CD8-positive, alpha-beta T cell (primary cell): ENCODE measurements at regions of chr13 and their contacts with region 1.

Region 1: DNA sequence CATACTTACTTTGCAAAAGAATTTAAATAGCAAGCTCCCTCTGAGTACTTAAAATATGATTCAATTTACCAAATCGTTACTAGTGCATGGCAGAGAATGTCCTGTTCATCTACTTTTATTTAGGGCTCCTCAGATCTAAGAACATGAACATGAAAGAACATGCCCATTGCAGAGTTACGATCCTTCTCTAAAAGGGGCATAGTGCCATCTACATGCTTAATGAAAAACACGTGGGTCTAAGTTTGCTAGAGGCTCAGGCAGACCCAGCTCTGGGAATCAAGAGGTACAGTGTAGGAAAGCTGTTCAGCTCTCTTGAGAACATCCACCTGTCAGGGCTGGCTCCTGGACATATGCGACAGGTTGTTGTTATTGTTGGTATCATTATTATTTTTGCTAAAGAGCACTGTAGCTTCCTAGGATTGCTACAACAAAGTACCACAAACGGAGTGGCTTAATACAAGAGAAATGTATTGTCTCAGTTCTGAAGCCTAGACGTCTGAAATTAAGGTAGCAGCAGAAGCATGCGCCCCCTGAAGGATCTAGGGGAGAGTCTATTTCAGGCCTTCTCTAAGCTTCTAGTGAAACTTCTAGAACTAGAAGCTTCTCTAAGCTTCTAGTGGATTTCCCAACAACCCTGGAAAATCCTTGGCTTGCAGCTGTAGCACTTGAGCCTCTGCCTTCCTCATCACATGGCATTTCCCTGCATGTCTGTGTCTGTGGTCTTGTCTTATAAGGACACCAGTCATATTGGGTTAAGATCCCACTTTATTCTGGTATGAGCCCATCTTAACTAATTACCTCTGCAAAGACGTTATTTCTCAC is 133.9 kb downstream of the DCT start:
- DNase-seq: peak in 2 of 9 experiments; percentile 55 to 68
- ATAC-seq: peak; percentile 56
- H3K4me3 ChIP-seq: no peak overlapping the region
- H3K4me3 Mint-ChIP-seq: no peak overlapping the region
- H3K27ac ChIP-seq: no peak overlapping the region
- H3K27ac Mint-ChIP-seq: no peak overlapping the region
- H3K4me1 ChIP-seq: no peaks in the 10 kb centered on the region
- H3K4me1 Mint-ChIP-seq: peaks cover 10% of the 10 kb centered on the region
- H3K27me3 ChIP-seq: no peaks in the 10 kb centered on the region
- H3K27me3 Mint-ChIP-seq: peaks cover 2% of the 10 kb centered on the region
- CTCF ChIP-seq: peak; percentile 34

Region 2: DNA sequence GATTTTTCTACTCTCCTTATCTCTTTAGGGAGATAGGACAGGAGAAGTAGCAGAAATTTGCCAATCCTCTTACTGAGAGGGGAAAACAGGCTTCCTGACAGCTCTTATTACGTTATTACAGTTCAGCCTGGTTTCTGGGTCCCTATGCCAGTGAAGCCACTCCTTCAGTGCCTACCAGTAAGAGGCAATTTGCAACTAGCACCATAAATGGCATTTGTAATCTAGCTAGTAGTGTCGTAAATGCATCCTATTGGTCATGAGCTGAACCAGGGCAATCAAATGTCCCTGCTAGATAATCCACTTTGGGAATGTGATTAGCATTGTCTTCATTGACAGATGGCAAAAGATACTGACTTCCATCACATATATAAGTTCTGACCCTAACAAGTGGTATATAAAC is 294.9 kb before region 1 on chr13:
- CTCF ChIA-PET with region 1: no interaction called
- POLR2A ChIA-PET with region 1: no interaction called
- intact Hi-C with region 1: no loop called
- DNase-seq: no peak
- ATAC-seq: no peak
- H3K4me3 ChIP-seq: no peak overlapping the region
- H3K4me3 Mint-ChIP-seq: no peak overlapping the region
- H3K27ac ChIP-seq: no peak overlapping the region
- H3K27ac Mint-ChIP-seq: no peak overlapping the region
- H3K4me1 ChIP-seq: no peaks in the 10 kb centered on the region
- H3K4me1 Mint-ChIP-seq: no peaks in the 10 kb centered on the region
- H3K27me3 ChIP-seq: no peaks in the 10 kb centered on the region
- H3K27me3 Mint-ChIP-seq: peaks cover 18% of the 10 kb centered on the region
- CTCF ChIP-seq: no peak

Region 3: GRCh38 chr13:94112227-94112626 is 233.4 kb before region 1 on chr13:
- CTCF ChIA-PET with region 1: interaction called, 7 read pairs
- POLR2A ChIA-PET with region 1: no interaction called
- intact Hi-C with region 1: loop called in 1 of 2 experiments (anchors 10 kb)
- DNase-seq: no peak
- ATAC-seq: no peak
- H3K4me3 ChIP-seq: no peak overlapping the region
- H3K4me3 Mint-ChIP-seq: no peak overlapping the region
- H3K27ac ChIP-seq: no peak overlapping the region
- H3K27ac Mint-ChIP-seq: no peak overlapping the region
- H3K4me1 ChIP-seq: no peaks in the 10 kb centered on the region
- H3K4me1 Mint-ChIP-seq: no peaks in the 10 kb centered on the region
- H3K27me3 ChIP-seq: no peaks in the 10 kb centered on the region
- H3K27me3 Mint-ChIP-seq: no peaks in the 10 kb centered on the region
- CTCF ChIP-seq: no peak

Region 4: DNA sequence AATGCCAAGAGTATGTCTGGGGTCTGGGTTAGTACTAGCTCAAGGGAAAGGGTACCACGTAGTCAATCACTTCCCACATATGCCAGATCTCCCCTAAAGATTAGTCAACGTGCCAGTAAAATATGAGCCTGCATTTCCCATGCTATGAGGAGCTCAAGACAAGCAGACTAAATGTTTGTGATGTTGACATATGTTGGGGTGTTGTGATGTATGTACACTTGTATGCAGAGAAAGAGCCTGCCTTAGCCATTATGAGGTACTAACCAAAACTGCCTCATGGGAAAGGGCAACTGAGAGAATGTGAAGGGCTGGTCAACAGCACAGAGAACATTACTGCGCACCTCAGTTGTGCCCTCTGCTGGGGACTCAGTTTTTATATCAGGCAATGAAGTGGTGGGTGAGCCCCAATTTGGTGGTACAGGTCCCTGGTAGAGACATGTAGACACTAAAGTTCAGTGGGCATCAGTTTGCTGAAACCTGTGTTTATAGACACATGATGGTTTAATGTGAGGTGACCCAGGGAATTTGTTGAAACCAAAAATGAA is 153.1 kb before region 1 on chr13:
- CTCF ChIA-PET with region 1: interaction called, 5 read pairs
- POLR2A ChIA-PET with region 1: no interaction called
- intact Hi-C with region 1: loop called in 1 of 2 experiments (anchors 10 kb)
- DNase-seq: peak in 2 of 9 experiments; percentile 3 to 5
- ATAC-seq: no peak
- H3K4me3 ChIP-seq: no peak overlapping the region
- H3K4me3 Mint-ChIP-seq: no peak overlapping the region
- H3K27ac ChIP-seq: no peak overlapping the region
- H3K27ac Mint-ChIP-seq: no peak overlapping the region
- H3K4me1 ChIP-seq: no peaks in the 10 kb centered on the region
- H3K4me1 Mint-ChIP-seq: peaks cover 2% of the 10 kb centered on the region
- H3K27me3 ChIP-seq: no peaks in the 10 kb centered on the region
- H3K27me3 Mint-ChIP-seq: peaks cover 2% of the 10 kb centered on the region
- CTCF ChIP-seq: no peak

Region 5: DNA sequence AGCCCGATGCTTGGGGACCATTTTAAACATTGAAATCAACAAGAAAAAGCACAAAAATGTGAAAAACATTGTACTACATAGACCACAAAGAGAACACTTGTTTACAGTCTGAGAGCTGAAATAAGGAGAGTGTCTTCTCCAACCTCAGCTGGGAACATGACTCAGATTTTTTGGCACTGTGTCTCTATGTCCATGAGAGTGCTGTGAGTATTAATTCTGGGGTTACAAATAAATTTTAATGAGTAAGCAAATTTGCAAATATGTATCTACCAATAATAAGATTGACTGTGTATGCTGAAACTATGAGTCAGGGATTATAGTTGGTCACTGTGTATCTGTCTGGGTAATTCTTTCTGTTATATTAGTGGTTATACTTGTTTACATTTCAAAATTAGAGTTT is 40.1 kb before region 1 on chr13:
- CTCF ChIA-PET with region 1: no interaction called
- POLR2A ChIA-PET with region 1: no interaction called
- intact Hi-C with region 1: no loop called
- DNase-seq: no peak
- ATAC-seq: no peak
- H3K4me3 ChIP-seq: no peak overlapping the region
- H3K4me3 Mint-ChIP-seq: no peak overlapping the region
- H3K27ac ChIP-seq: no peak overlapping the region
- H3K27ac Mint-ChIP-seq: no peak overlapping the region
- H3K4me1 ChIP-seq: no peaks in the 10 kb centered on the region
- H3K4me1 Mint-ChIP-seq: no peaks in the 10 kb centered on the region
- H3K27me3 ChIP-seq: no peaks in the 10 kb centered on the region
- H3K27me3 Mint-ChIP-seq: no peaks in the 10 kb centered on the region
- CTCF ChIP-seq: no peak

Region 6: DNA sequence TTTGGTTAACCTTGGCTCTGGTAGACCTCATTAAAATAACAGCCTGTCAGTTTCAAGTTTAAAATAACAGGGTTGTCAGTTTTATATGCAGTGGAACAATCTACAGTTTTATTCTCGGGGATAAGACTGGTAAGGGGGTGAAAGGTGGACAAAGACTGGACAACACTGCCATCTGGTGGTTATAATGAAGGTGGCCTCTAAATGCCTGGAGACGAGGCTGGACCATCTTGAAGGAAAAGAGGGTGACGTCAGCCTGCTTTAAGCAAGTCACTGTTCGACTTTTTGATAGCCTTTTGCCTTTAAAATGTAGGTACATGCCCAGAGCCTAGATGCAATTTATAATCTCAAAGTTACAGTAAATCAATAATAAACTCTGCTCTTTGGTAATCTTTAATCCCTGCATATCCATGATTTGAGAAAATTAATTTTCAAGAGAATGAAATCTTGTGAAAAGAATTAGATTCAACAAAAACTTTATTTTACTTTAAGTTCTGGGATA is 16.9 kb after region 1 on chr13:
- CTCF ChIA-PET with region 1: interaction called, 19 read pairs
- POLR2A ChIA-PET with region 1: no interaction called
- intact Hi-C with region 1: no loop called
- DNase-seq: peak; percentile 28 to 84 (median 58)
- ATAC-seq: peak; percentile 98
- H3K4me3 ChIP-seq: no peak overlapping the region
- H3K4me3 Mint-ChIP-seq: no peak overlapping the region
- H3K27ac ChIP-seq: no peak overlapping the region
- H3K27ac Mint-ChIP-seq: no peak overlapping the region
- H3K4me1 ChIP-seq: no peaks in the 10 kb centered on the region
- H3K4me1 Mint-ChIP-seq: no peaks in the 10 kb centered on the region
- H3K27me3 ChIP-seq: no peaks in the 10 kb centered on the region
- H3K27me3 Mint-ChIP-seq: no peaks in the 10 kb centered on the region
- CTCF ChIP-seq: peak; percentile 83

Region 7: GRCh38 chr13:95968906-95969305 is 1623.3 kb after region 1 on chr13:
- CTCF ChIA-PET with region 1: no interaction called
- POLR2A ChIA-PET with region 1: no interaction called
- intact Hi-C with region 1: no loop called
- DNase-seq: no peak
- ATAC-seq: no peak
- H3K4me3 ChIP-seq: no peak overlapping the region
- H3K4me3 Mint-ChIP-seq: no peak overlapping the region
- H3K27ac ChIP-seq: no peak overlapping the region
- H3K27ac Mint-ChIP-seq: no peak overlapping the region
- H3K4me1 ChIP-seq: no peaks in the 10 kb centered on the region
- H3K4me1 Mint-ChIP-seq: no peaks in the 10 kb centered on the region
- H3K27me3 ChIP-seq: no peaks in the 10 kb centered on the region
- H3K27me3 Mint-ChIP-seq: no peaks in the 10 kb centered on the region
- CTCF ChIP-seq: no peak